ENCODE measurements at regions of chr9 and their contacts with region 1.

Region 1: GRCh38 chr9:29039258-29039657 is 1466.0 kb upstream of the C9orf72 start:
- DNase-seq: no peak
- H3K4me3 ChIP-seq: no peak overlapping the region
- H3K27ac ChIP-seq: no peak overlapping the region
- H3K4me1 ChIP-seq: no peaks in the 10 kb centered on the region
- H3K27me3 ChIP-seq: no peaks in the 10 kb centered on the region
- CTCF ChIP-seq: no peak
- POLR2A ChIP-seq: no peak

Region 2: GRCh38 chr9:29060041-29060440 is 20.8 kb after region 1 on chr9:
- intact Hi-C with region 1: loop called (anchors 2 kb)
- DNase-seq: no peak
- H3K4me3 ChIP-seq: no peak overlapping the region
- H3K27ac ChIP-seq: no peak overlapping the region
- H3K4me1 ChIP-seq: no peaks in the 10 kb centered on the region
- H3K27me3 ChIP-seq: no peaks in the 10 kb centered on the region
- CTCF ChIP-seq: no peak
- POLR2A ChIP-seq: no peak

Measured in breast epithelium (tissue), 4 donors.